ENCODE measurements at regions of chr1 and their contacts with region 1.

Region 1: GRCh38 chr1:32005522-32005921 is 8.1 kb upstream of the KHDRBS1 start:
- DNase-seq: no peak
- ATAC-seq: no peak
- H3K4me3 Mint-ChIP-seq: no peak overlapping the region
- H3K27ac Mint-ChIP-seq: no peak overlapping the region
- H3K4me1 Mint-ChIP-seq: peaks cover 7% of the 10 kb centered on the region
- H3K27me3 Mint-ChIP-seq: no peaks in the 10 kb centered on the region

Region 2: GRCh38 chr1:31815752-31816500 is 189.6 kb before region 1 on chr1 and contains the start of gene SPOCD1:
- CTCF ChIA-PET with region 1: interaction called, 3 read pairs
- POLR2A ChIA-PET with region 1: no interaction called
- intact Hi-C with region 1: loop called in 1 of 2 experiments (anchors 1 kb)
- DNase-seq: peak; percentile 94
- ATAC-seq: peak; percentile 93
- H3K4me3 Mint-ChIP-seq: no peak within 1 kb of the TSS
- H3K27ac Mint-ChIP-seq: peak within 1 kb of the TSS; percentile 17
- H3K4me1 Mint-ChIP-seq: peaks cover 9% of the 10 kb centered on the region
- H3K27me3 Mint-ChIP-seq: no peaks in the 10 kb centered on the region
- total RNA-seq, gene SPOCD1: 0.79 to 0.91 TPM

Region 3: DNA sequence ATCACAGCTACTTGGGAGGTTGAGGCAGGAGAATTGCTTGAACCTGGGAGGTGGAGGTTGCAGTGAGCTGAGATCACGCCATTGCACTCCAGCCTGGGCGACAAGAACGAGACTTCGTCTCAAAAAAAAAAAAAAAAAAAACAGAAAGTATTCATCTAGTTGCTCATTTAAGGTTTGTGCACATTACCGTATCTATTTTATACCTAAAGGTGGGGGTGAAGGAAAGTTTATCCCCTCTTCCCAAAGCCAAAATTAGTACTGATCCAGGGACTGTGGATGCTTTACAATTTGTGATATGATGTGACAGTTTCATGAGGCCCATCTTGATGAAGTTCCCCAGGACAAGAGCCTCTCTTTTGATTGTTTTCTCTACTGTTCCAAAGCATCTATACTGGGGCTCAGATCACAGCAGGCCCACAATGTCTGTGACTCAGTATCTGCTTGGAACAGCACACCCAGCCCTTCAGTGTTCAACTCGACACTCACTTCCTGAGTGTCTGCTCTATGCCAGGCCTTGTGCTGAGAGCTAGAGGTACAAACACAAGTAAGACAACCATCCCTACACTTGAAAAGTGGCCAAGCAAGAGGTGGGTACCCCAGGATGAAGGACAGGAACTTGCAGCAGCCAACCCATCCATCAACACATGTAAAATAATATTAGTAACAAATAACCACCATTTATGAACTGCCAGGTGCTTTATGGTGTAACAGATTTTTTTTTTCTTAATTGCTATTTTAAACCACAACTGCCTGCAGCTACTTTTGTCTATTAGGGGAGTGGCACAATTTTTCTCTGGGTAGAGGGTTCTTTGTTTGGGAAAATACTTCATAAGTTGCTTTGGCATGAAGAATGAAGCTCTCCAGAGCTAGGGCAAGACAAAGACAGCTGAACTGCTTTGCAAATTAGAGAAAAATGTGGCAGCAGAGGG is 20.8 kb before region 1 on chr1:
- CTCF ChIA-PET with region 1: interaction called, 11 read pairs
- POLR2A ChIA-PET with region 1: interaction called, 7 read pairs
- intact Hi-C with region 1: no loop called
- DNase-seq: peak; percentile 67
- ATAC-seq: peak; percentile 90
- H3K4me3 Mint-ChIP-seq: peak overlapping the region; percentile 7
- H3K27ac Mint-ChIP-seq: peak overlapping the region; percentile 94
- H3K4me1 Mint-ChIP-seq: peaks cover 51% of the 10 kb centered on the region
- H3K27me3 Mint-ChIP-seq: no peaks in the 10 kb centered on the region

Region 4: GRCh38 chr1:31991182-31991581 is 14.3 kb before region 1 on chr1:
- CTCF ChIA-PET with region 1: interaction called, 21 read pairs
- POLR2A ChIA-PET with region 1: no interaction called
- intact Hi-C with region 1: no loop called
- DNase-seq: no peak
- ATAC-seq: peak; percentile 9
- H3K4me3 Mint-ChIP-seq: no peak overlapping the region
- H3K27ac Mint-ChIP-seq: no peak overlapping the region
- H3K4me1 Mint-ChIP-seq: peaks cover 18% of the 10 kb centered on the region
- H3K27me3 Mint-ChIP-seq: no peaks in the 10 kb centered on the region

Region 5: DNA sequence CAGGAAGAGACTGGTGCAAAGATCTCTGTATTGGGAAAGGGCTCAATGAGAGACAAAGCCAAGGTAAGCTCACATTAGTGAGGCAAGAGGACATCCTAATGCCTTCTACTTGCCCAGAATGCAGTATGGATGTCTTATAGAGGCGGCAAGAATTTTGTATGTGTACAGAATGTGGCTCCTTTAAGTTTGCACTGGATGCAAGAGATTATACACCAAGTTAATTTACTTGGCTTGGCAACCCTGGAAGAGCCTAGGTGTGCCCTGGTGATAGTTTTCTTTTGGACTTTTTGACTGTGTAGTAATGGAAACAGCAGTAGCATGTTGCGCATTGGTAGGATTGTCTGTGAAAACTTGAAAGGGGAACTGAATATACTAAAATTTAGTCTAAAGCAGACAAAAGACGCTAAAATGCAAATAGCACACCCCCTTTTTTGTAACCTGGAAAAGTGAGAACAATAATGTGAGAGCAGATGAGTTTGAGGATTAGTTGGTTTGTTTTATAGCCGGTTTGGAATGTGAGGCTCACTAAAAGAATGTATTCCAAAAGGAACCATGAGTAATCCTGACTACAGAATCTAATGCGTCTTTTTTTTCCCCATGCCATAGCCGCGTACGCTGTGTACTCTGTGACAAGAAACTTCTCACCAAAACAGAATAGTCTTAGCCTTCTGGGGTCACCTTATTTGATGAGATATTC is 26.2 kb after region 1 on chr1:
- CTCF ChIA-PET with region 1: no interaction called
- POLR2A ChIA-PET with region 1: no interaction called
- intact Hi-C with region 1: no loop called
- DNase-seq: no peak
- ATAC-seq: no peak
- H3K4me3 Mint-ChIP-seq: no peak overlapping the region
- H3K27ac Mint-ChIP-seq: peak overlapping the region; percentile 5
- H3K4me1 Mint-ChIP-seq: peaks cover 26% of the 10 kb centered on the region
- H3K27me3 Mint-ChIP-seq: no peaks in the 10 kb centered on the region